AG04449 (cell line): ENCODE measurements at regions of chr3 and their contacts with region 1.

Region 1: GRCh38 chr3:69306239-69307185 is 79.4 kb downstream of the FRMD4B start:
- DNase-seq: peak; percentile 51
- H3K4me3 ChIP-seq: no peak overlapping the region
- CTCF ChIP-seq: peak; percentile 87

Region 2: GRCh38 chr3:69174871-69175737 is 131.4 kb before region 1 on chr3:
- CTCF ChIA-PET with region 1: interaction called, 16 read pairs
- POLR2A ChIA-PET with region 1: no interaction called
- DNase-seq: no peak
- H3K4me3 ChIP-seq: no peak overlapping the region
- CTCF ChIP-seq: no peak

Region 3: DNA sequence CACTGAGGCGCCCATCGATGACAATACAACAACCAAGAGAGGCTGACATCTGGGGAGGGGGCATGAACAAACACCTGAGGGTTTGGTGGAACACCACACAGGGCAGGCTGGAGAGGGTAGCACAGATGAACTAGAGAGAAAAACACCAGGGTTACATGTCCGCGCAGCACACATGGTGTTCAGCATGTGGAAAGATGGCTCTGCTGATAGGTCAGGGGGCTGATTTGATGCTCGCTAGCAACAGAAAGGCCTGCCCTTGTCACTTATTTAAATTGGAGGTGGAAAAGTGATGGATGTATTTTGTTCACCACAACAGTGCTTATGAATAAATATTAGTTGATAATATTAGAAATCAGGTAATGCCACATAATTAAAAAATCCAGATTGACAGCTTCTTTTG is 11.9 kb after region 1 on chr3:
- CTCF ChIA-PET with region 1: interaction called, 52 read pairs
- POLR2A ChIA-PET with region 1: no interaction called
- DNase-seq: no peak
- H3K4me3 ChIP-seq: no peak overlapping the region
- CTCF ChIP-seq: no peak

Region 4: DNA sequence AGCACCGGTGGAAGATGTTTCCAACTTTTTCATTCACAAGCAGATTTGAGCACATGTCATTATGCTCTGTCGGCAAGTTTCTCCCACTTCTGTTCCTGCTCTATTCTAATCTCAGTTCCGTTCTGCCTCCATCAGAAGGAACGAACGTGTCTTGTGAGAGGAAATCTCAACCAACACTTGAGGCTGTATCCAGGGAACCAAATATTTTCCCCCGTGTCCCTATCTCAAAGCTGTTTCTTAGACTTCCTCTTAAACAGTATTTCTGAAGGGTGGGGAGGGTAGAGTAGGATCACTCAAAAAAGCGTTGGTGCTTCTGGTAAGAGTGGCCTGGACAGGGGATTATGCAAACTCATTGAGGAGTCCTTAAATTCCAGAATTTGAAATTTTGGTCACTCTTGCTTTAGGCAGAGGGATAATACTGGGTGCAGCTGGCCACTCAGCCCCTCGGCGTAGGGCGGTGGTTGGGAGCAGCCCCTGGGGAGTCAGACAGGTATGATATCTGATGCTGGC is 24.4 kb after region 1 on chr3:
- CTCF ChIA-PET with region 1: interaction called, 31 read pairs
- POLR2A ChIA-PET with region 1: no interaction called
- DNase-seq: no peak
- H3K4me3 ChIP-seq: no peak overlapping the region
- CTCF ChIP-seq: no peak

Region 5: DNA sequence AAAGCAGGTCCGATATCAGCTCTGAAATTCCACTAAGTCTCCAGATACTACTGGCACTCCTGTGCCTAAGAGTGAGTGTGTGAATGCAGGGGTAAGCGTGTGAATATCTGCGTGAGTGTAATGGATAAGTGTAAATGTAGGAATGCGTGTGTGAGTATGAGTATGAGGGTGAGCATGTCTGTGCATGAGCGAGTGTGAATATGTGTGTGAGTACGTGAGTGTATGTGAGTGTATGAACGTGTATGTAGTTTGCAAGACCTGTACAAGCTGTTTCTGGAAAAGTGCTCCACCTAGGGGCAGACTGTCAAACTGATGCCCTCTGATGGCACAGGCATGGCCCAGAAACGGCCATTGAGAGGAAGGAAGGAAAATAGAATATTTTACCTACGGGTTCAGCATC is 103.7 kb after region 1 on chr3:
- CTCF ChIA-PET with region 1: interaction called, 114 read pairs
- POLR2A ChIA-PET with region 1: no interaction called
- DNase-seq: no peak
- H3K4me3 ChIP-seq: no peak overlapping the region
- CTCF ChIP-seq: peak; percentile 80

Region 6: GRCh38 chr3:69439643-69440270 is 133.2 kb after region 1 on chr3:
- CTCF ChIA-PET with region 1: interaction called, 11 read pairs
- POLR2A ChIA-PET with region 1: no interaction called
- DNase-seq: no peak
- H3K4me3 ChIP-seq: no peak overlapping the region
- CTCF ChIP-seq: peak; percentile 38

Region 7: DNA sequence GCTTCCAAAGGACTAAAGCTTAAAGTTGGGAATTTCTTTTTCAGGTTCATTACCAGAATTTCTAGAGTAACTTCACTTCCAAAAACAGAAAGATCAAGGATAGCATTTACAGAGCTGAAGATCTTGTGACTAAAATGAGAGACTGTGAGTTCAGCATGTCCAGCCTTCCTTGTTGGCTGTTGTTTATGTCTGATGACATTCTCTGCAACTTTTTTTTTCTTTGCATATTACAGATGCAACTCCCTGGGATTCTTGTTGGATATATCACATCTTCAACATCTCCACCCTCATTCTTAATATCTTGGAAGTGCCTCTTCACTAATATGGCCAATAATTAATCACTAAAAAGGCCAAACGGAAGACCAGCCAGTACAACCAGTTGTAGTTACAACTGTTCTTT is 165.6 kb after region 1 on chr3:
- CTCF ChIA-PET with region 1: no interaction called
- POLR2A ChIA-PET with region 1: no interaction called
- DNase-seq: no peak
- H3K4me3 ChIP-seq: no peak overlapping the region
- CTCF ChIP-seq: no peak